Heart right ventricle (tissue), 16 donors: ENCODE measurements at regions of chr1 and their contacts with region 1.

Region 1: GRCh38 chr1:226407497-226408284 is at the start of gene PARP1:
- DNase-seq: peak; percentile 83 to 89
- ATAC-seq: peak; percentile 82 to 96 (median 92)
- H3K4me3 ChIP-seq: peak within 1 kb of the TSS; percentile 57 to 98 (median 87)
- H3K27ac ChIP-seq: peak within 1 kb of the TSS; percentile 33 to 93 (median 87)
- H3K4me1 ChIP-seq: peaks cover 16 to 49% (median 44%) of the 10 kb centered on the region in 9 donors
- H3K27me3 ChIP-seq: no peaks in the 10 kb centered on the region
- CTCF ChIP-seq: peak; percentile 62 to 99 (median 78)
- total RNA-seq, gene PARP1: 98.9 to 154 (median 111) TPM

Region 2: GRCh38 chr1:226365831-226366231 is 41.9 kb before region 1 on chr1:
- intact Hi-C with region 1: loop called in 1 of 10 experiments (anchors 5 kb)
- DNase-seq: no peak
- ATAC-seq: no peak
- H3K4me3 ChIP-seq: no peak overlapping the region
- H3K27ac ChIP-seq: no peak overlapping the region
- H3K4me1 ChIP-seq: peaks cover 0 to 33% (median 13%) of the 10 kb centered on the region in 9 donors
- H3K27me3 ChIP-seq: no peaks in the 10 kb centered on the region
- CTCF ChIP-seq: no peak

Region 3: DNA sequence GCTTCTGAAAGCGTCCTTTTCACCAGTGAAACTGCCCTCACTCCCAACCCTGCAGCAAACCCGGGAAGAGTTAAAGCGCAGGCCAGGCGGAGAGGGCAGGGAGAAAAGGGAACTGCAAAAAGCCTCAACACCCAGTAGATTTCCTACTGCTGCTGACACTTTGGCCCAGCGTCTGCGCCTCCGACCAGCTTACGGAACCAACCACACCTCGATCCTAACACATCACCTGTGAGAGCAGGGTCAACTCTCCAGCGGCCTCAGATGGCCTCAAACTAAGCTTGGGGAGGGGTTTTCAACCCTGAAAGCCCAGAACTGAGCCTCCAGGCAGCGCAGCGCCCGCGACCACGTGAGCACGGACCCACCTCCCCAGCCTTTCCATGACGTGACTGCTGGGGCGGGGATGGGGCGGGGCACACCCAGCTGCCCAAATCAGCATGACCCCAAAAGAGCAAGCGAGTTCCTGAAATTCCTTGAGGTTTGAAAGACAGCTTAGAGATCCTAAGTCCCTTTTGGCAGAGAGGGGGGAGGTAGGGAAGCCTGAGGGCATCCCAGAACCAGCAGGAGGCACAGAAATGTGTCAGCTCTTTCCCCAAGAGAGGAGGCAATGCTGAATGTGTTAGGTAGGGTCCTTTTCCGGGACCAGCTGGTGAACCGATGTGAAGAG is 272.3 kb after region 1 on chr1:
- intact Hi-C with region 1: no loop called
- DNase-seq: peak; percentile 89 to 91
- ATAC-seq: peak; percentile 84 to 90 (median 88)
- H3K4me3 ChIP-seq: peak overlapping the region in 9 of 10 donors; percentile 0 to 52 (median 48)
- H3K27ac ChIP-seq: peak overlapping the region; percentile 42 to 93 (median 90)
- H3K4me1 ChIP-seq: peaks cover 0 to 100% (median 78%) of the 10 kb centered on the region in 9 donors
- H3K27me3 ChIP-seq: no peaks in the 10 kb centered on the region
- CTCF ChIP-seq: peak in 1 of 9 donors; percentile 7